ENCODE measurements at regions of chr19 and their contacts with region 1.

Region 1: GRCh38 chr19:21835810-21836444 is at the start of gene ZNF43:
- DNase-seq: peak; percentile 98
- ATAC-seq: peak; percentile 99
- total RNA-seq, gene ZNF43: 4.4 TPM

Region 2: DNA sequence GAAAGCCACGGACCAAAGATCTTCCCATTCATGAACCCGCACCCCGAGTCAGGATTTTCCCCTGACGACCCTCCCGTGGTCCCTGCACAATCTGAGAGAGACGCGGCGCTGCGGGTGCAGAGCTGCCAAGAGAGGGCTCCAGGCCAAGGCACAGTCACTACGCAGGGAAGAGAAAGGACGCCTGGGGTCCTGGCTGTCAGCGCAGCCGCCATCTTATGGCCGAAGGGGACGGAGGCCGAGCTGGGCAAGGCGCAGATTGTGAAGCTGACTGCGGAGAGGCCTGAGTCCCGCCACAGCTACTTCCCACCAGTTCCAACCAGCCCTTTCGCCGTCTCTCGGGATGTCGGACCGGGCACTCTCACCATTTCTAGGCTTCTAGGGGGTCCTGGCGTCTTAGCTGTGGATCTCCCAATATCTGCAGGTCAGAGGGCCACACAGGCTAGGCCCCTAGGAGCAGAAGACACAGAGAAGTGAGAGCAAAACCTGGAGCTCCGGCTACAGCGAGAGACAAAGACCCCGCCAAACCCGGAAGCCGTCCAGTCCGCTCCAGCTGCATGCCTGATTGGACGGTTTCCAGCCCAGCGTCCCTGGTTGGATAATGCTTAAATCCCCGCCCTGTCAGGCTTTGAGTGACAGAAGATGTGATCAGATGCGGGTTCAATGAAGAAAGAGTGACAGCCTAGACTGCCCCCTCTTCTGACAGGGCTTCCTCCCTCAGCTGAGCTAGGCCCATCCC is 68.7 kb before region 1 on chr19 and contains the start of gene ZNF100:
- intact Hi-C with region 1: loop called (anchors 5 kb)
- DNase-seq: peak; percentile 95
- ATAC-seq: peak; percentile 99
- total RNA-seq, gene ZNF100: 6.3 TPM

Region 3: GRCh38 chr19:21912654-21913053 is 76.7 kb after region 1 on chr19:
- intact Hi-C with region 1: no loop called
- DNase-seq: no peak
- ATAC-seq: no peak

Region 4: DNA sequence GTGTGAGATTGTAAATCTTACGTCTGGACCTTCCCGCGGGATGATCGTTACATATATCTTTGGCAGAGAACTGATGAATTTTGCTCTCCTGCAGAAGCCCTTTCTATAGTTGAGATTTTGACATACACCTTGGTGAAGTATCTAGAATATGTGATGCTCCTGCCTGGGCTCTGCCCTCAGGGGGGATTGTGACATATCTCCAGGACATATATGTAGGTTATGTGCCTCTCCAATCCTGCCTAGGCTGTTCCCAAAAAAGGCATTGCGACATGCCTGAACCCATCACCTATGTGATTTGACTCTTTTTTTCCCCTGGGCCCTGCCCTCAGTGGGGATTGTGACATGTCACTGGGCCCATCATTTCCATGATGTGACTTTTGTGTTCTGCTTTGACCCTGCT is 98.2 kb after region 1 on chr19:
- intact Hi-C with region 1: no loop called
- DNase-seq: no peak
- ATAC-seq: no peak

Measured in left ventricle myocardium superior (tissue), 1 donor.